Activated T-helper 2 cell treated with anti-CD3 and anti-CD28 coated beads, Interferon-gamma antibody, Interleukin-2, Interleukin-4, amounts not matched to agents 10 μg/mL and 5 μg/mL and 100 μg/mL, durations not matched to agents 14 hours and 24 hours and 36 hours (primary cell): ENCODE measurements at regions of chr1 and their contacts with region 1.

Region 1: DNA sequence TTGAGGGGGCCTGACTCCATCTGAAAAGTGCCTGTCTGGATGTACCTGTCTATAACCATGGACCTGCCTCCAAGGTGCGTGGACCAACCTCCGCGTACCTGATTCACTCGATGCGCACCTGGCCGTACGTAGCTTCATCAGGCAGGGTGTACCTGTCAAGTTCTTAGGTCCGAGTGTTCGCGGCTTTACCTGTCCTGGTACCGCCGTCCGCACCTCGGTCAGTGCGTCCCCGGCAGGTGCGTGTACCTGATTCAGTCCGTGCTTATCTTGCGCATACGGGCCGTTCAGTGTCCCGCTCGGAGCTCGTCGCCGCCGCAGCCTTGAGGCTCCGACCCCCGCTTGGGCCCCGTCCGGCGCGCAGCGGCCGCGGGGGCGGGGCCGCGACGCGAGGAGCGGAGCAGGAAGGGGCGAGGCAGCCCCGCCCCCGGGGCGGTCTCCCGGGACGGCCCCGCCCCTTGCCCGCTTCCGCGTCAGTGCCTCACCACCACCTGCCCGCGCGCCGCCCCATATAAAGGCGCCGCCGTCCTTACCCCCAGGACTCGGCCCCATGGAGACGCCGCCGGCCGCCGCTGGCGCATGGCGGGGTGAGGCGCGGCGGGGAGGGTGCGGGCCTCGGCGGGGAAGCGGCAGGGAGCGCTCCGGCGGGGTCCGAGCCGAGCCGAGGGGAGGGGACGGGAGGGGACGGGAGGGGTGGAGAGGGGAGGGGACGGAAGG is at the start of gene ZC3H12A:
- DNase-seq: peak; percentile 86
- H3K4me3 Mint-ChIP-seq: peak within 1 kb of the TSS; percentile 96
- H3K27ac Mint-ChIP-seq: peak within 1 kb of the TSS; percentile 95
- H3K4me1 Mint-ChIP-seq: peaks cover 40% of the 10 kb centered on the region
- H3K27me3 Mint-ChIP-seq: no peaks in the 10 kb centered on the region
- total RNA-seq, gene ZC3H12A: 23.6 and 25.3 TPM in 2 replicates

Region 2: GRCh38 chr1:36385410-36386257 is 1088.6 kb before region 1 on chr1 and contains the start of gene STK40:
- intact Hi-C with region 1: loop called (anchors 10 kb)
- DNase-seq: peak; percentile 97
- H3K4me3 Mint-ChIP-seq: peak within 1 kb of the TSS; percentile 91
- H3K27ac Mint-ChIP-seq: peak within 1 kb of the TSS; percentile 94
- H3K4me1 Mint-ChIP-seq: peaks cover 37% of the 10 kb centered on the region
- H3K27me3 Mint-ChIP-seq: no peaks in the 10 kb centered on the region
- total RNA-seq, gene STK40: 41.3 and 42.4 TPM in 2 replicates

Region 3: GRCh38 chr1:37574834-37575480 is 100.8 kb after region 1 on chr1:
- intact Hi-C with region 1: loop called (anchors 10 kb)
- DNase-seq: no peak
- H3K4me3 Mint-ChIP-seq: no peak overlapping the region
- H3K27ac Mint-ChIP-seq: peak overlapping the region; percentile 81
- H3K4me1 Mint-ChIP-seq: peaks cover 66% of the 10 kb centered on the region
- H3K27me3 Mint-ChIP-seq: no peaks in the 10 kb centered on the region

Region 4: GRCh38 chr1:37595440-37596319 is 121.5 kb after region 1 on chr1 and contains the start of gene GNL2:
- intact Hi-C with region 1: no loop called
- DNase-seq: peak; percentile 97
- H3K4me3 Mint-ChIP-seq: peak within 1 kb of the TSS; percentile 99
- H3K27ac Mint-ChIP-seq: peak within 1 kb of the TSS; percentile 92
- H3K4me1 Mint-ChIP-seq: peaks cover 22% of the 10 kb centered on the region
- H3K27me3 Mint-ChIP-seq: peaks cover 3% of the 10 kb centered on the region
- total RNA-seq, gene GNL2: 95.6 and 98.0 TPM in 2 replicates

Region 5: GRCh38 chr1:37995751-37996345 is 521.6 kb after region 1 on chr1:
- intact Hi-C with region 1: loop called (anchors 10 kb)
- DNase-seq: no peak
- H3K4me3 Mint-ChIP-seq: peak overlapping the region; percentile 54
- H3K27ac Mint-ChIP-seq: peak overlapping the region; percentile 75
- H3K4me1 Mint-ChIP-seq: peaks cover 45% of the 10 kb centered on the region
- H3K27me3 Mint-ChIP-seq: no peaks in the 10 kb centered on the region